ENCODE measurements at regions of chr10 and their contacts with region 1.

Region 1: DNA sequence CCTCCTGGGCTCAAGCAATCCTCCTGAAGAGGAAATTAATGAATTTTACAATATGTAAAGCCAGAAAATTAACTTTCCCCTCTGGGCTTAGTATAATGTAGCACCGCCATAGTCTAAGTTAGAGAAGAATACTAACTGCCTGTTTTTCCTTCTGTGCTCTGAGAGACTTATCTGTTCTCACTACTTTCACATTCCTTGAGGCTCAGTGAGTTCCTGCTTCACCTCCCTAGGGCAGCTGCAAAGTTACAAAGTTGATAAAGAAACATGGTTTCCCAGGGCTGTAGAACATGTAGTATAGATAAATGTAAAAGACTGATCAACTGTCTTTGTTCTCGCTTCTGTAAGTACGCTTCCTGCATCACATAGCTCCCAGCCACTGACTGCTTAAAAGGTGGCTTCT is 16.0 kb upstream of the OLAH start:
- DNase-seq: no peak
- H3K4me3 ChIP-seq: no peak overlapping the region
- H3K27ac ChIP-seq: no peak overlapping the region
- H3K4me1 ChIP-seq: no peaks in the 10 kb centered on the region
- H3K27me3 ChIP-seq: no peaks in the 10 kb centered on the region
- CTCF ChIP-seq: no peak

Region 2: DNA sequence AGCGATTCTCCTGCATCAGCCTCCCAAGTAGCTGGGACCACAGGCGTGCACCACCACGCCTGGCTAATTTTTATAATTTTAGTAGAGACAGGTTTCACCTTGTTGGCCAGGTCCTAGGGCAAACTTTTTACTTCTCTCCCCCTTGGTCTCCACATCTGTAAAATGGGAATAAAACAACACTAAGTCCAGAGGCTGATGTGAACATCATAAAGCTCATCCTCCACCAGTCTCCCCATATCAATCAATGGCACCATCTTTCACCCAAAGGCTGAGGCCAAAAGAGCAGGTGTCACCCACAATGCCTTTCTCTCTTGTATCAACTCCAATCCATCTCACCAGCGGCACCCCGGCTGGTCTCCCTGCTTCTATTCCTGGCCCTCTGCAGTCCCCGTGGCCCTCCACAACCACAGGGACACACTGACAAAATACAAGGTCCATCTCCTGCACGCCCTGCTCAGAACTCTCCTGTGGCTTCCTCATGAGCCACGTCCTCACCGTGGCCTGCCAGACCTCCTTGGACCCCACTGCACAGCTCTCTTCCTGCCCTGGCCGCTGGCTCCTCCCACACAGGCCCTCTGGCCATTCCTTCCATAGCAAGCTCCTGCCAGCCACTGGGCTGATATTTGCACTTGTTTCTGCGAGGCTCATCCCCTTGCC is 432.1 kb before region 1 on chr10:
- CTCF ChIA-PET with region 1: no interaction called
- POLR2A ChIA-PET with region 1: interaction called, 13 read pairs
- intact Hi-C with region 1: no loop called
- DNase-seq: no peak
- H3K4me3 ChIP-seq: no peak overlapping the region
- H3K27ac ChIP-seq: no peak overlapping the region
- H3K4me1 ChIP-seq: no peaks in the 10 kb centered on the region
- H3K27me3 ChIP-seq: no peaks in the 10 kb centered on the region
- CTCF ChIP-seq: no peak

Region 3: DNA sequence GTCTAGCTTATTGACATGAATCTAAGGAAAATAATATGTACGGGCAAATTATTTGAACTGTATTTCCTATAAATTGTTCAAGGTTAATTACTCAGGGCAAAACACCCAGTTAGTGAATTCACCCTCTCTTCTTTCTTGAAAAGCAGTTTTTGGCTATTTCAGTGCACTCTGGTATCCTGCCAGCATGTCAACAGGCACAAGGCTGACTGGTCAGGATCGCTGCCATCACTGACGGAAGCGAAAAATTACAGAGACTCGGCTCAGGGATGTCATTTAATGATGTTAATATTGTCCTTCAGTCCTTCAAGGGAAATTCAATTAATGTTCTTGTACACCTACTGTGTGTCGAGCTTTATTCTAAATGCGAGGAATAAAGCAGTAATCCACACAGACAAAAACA is 12.3 kb before region 1 on chr10:
- CTCF ChIA-PET with region 1: no interaction called
- POLR2A ChIA-PET with region 1: interaction called, 14 read pairs
- intact Hi-C with region 1: no loop called
- DNase-seq: no peak
- H3K4me3 ChIP-seq: no peak overlapping the region
- H3K27ac ChIP-seq: no peak overlapping the region
- H3K4me1 ChIP-seq: no peaks in the 10 kb centered on the region
- H3K27me3 ChIP-seq: no peaks in the 10 kb centered on the region
- CTCF ChIP-seq: no peak